Activated CD8-positive, alpha-beta T cell treated with anti-CD3 and anti-CD28 coated beads for 36 hours (primary cell): ENCODE measurements at regions of chr7 and their contacts with region 1.

Region 1: GRCh38 chr7:4725014-4725849 is 43.1 kb downstream of the FOXK1 start:
- DNase-seq: peak; percentile 87
- ATAC-seq: peak; percentile 79
- H3K4me3 Mint-ChIP-seq: peak overlapping the region; percentile 74
- H3K27ac Mint-ChIP-seq: peak overlapping the region; percentile 88
- H3K4me1 Mint-ChIP-seq: peaks cover 57% of the 10 kb centered on the region
- H3K27me3 Mint-ChIP-seq: no peaks in the 10 kb centered on the region
- CTCF ChIP-seq: no peak

Region 2: GRCh38 chr7:4641667-4642467 is 83.4 kb before region 1 on chr7:
- CTCF ChIA-PET with region 1: interaction called, 5 read pairs
- POLR2A ChIA-PET with region 1: interaction called, 12 read pairs
- intact Hi-C with region 1: no loop called
- DNase-seq: peak; percentile 97
- ATAC-seq: peak; percentile 91
- H3K4me3 Mint-ChIP-seq: peak overlapping the region; percentile 90
- H3K27ac Mint-ChIP-seq: peak overlapping the region; percentile 92
- H3K4me1 Mint-ChIP-seq: peaks cover 5% of the 10 kb centered on the region
- H3K27me3 Mint-ChIP-seq: no peaks in the 10 kb centered on the region
- CTCF ChIP-seq: no peak

Region 3: DNA sequence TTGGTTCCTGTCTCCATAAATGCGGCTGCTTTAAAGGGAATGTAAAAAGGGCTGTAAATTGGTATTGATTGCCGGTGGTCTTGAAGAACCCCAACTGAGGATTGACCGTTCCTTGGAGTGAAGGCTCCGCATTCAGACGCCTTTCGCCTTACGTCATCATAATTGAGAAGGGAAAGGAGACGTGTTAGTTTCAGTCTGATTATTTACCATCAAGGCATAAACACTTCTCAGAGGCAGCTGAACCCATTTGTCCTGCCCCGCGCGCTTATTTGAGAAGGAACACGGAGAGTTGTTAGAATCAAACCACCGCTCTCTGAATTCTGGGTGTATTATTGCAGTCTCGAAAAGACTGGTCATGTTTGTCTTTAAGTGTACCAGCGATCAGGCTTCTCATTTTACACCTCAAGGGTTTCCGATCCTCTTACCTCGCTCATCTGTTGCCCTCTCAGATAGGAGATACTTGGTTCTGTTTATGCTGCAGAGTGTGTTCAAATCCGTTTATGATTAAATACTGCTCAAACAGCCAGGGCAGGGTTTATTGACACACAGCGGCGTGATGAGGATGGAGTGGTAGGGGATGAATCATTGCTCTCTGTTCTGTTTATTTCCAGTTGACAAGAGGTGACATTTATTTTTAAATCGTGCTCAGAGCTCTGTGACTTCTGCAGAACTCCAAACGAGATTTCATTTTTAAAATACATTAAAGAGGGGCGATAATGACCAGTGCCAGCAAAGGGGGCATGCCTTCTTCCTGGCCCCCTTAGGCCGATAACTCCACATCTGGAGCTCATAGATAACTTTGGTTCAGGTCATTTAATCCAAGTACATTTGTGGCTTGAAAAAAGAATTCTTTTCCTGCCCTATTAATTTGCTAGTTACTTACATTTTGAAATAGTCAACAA is 12.7 kb before region 1 on chr7:
- CTCF ChIA-PET with region 1: interaction called, 13 read pairs
- POLR2A ChIA-PET with region 1: interaction called, 4 read pairs
- intact Hi-C with region 1: no loop called
- DNase-seq: peak; percentile 31
- ATAC-seq: peak; percentile 83
- H3K4me3 Mint-ChIP-seq: no peak overlapping the region
- H3K27ac Mint-ChIP-seq: peak overlapping the region; percentile 67
- H3K4me1 Mint-ChIP-seq: peaks cover 45% of the 10 kb centered on the region
- H3K27me3 Mint-ChIP-seq: no peaks in the 10 kb centered on the region
- CTCF ChIP-seq: no peak

Region 4: GRCh38 chr7:4738711-4739527 is 13.7 kb after region 1 on chr7:
- CTCF ChIA-PET with region 1: interaction called, 5 read pairs
- POLR2A ChIA-PET with region 1: interaction called, 16 read pairs
- intact Hi-C with region 1: no loop called
- DNase-seq: peak; percentile 55
- ATAC-seq: peak; percentile 68
- H3K4me3 Mint-ChIP-seq: peak overlapping the region; percentile 50
- H3K27ac Mint-ChIP-seq: peak overlapping the region; percentile 82
- H3K4me1 Mint-ChIP-seq: peaks cover 51% of the 10 kb centered on the region
- H3K27me3 Mint-ChIP-seq: no peaks in the 10 kb centered on the region
- CTCF ChIP-seq: no peak

Region 5: GRCh38 chr7:4783762-4784351 is 58.6 kb after region 1 on chr7:
- CTCF ChIA-PET with region 1: no interaction called
- POLR2A ChIA-PET with region 1: no interaction called
- intact Hi-C with region 1: no loop called
- DNase-seq: no peak
- ATAC-seq: no peak
- H3K4me3 Mint-ChIP-seq: no peak overlapping the region
- H3K27ac Mint-ChIP-seq: no peak overlapping the region
- H3K4me1 Mint-ChIP-seq: peaks cover 2% of the 10 kb centered on the region
- H3K27me3 Mint-ChIP-seq: no peaks in the 10 kb centered on the region
- CTCF ChIP-seq: no peak